Transverse colon (tissue), 4 donors: ENCODE measurements at regions of chr3 and their contacts with region 1.

Region 1: GRCh38 chr3:156181323-156181908 is 61.0 kb downstream of the KCNAB1 start:
- DNase-seq: no peak
- H3K4me3 ChIP-seq: no peak overlapping the region
- H3K27ac ChIP-seq: no peak overlapping the region
- H3K4me1 ChIP-seq: no peaks in the 10 kb centered on the region
- H3K27me3 ChIP-seq: no peaks in the 10 kb centered on the region
- CTCF ChIP-seq: no peak
- EP300 ChIP-seq: no peak
- POLR2A ChIP-seq: no peak

Region 2: DNA sequence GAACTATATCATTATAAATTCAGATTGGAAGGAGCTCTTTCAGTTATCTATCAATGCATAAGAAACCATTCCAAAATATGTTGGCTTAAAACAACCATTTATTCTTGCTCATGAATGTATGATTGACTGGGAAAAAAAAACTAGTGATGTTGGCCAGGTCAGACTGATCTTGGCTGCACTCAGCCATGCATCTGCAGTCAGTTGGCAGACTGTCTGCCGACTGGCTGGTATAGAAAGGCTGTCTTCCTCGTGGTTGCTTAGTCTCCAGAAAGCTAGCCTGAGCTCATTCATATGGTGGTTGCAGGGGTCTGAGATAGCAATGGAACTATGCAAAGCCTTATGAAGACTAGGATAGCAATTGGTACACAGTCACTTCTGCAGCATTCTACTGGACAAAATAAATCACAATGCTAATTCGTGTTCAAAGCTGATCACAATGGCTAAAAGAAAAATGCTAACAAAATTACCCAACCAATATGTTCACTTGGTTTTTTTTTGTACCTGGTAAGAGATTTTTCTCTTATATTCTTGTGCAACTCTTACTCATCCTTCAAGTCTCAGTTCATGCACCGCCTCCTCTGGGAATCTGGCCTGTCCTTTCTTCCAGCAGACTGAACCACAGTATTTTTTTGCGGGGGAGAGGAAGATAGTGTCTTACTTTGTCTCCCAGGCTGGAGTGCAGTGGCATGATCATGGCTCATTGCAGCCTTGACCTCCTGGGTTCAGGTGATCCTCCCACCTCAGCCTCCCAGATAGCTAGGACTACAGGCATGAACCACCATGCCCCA is 65.7 kb after region 1 on chr3:
- in situ Hi-C with region 1: no loop called
- intact Hi-C with region 1: loop called (anchors 10 kb)
- DNase-seq: no peak
- H3K4me3 ChIP-seq: no peak overlapping the region
- H3K27ac ChIP-seq: no peak overlapping the region
- H3K4me1 ChIP-seq: no peaks in the 10 kb centered on the region
- H3K27me3 ChIP-seq: no peaks in the 10 kb centered on the region
- CTCF ChIP-seq: no peak
- EP300 ChIP-seq: no peak
- POLR2A ChIP-seq: no peak